AG04450 (cell line): ENCODE measurements at regions of chr11 and their contacts with region 1.

Region 1: GRCh38 chr11:1682225-1682905 is 14.6 kb upstream of the KRTAP5-6 start:
- DNase-seq: no peak
- H3K4me3 ChIP-seq: no peak overlapping the region
- H3K27ac ChIP-seq: no peak overlapping the region
- H3K27me3 ChIP-seq: peaks cover 4% of the 10 kb centered on the region
- CTCF ChIP-seq: no peak

Region 2: DNA sequence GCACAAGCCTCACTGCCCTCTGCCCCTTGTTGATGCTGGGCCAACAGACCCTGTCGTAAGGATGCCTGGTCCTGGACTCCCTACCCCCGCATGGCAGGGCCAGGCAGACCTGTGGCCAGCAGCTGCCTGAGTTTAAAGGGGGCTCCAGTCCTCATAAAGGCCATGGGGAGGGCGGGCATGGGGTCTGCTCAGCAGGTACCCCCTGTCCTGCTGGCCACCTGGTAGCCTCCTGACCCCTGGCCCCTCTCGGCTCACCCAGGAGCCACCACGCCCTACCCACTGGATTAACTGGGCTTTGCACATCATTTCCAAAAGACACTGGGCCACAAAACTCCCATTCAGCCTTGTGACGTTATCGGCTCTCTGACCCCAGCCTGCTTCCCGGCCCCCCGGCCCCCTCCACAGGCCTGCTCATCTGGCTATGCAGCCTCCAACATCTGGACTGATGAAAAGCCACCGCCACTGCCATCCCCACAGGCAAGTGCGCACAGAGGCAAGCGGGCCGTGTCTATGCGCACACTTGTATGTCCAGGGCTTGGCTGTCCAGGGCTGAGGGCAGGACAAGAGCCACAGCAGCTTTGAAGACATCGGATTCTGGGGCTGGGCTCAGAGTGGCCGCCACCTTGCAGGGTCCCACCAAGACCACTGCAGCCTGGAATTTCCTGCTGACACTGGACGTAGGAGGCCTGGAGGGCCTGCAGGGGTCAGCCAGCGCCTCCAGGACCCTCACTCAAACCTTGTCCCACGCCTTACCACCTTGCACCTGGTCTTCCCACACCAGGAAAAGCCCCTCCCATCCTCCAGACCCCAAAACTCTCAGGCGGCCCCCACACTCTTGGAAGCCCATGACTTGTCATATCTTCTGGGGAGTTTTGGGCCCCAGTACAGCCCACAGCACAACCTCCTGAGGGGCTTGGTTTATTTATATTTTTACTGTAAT is 408.1 kb after region 1 on chr11:
- CTCF ChIA-PET with region 1: no interaction called
- POLR2A ChIA-PET with region 1: interaction called, 14 read pairs
- DNase-seq: no peak
- H3K4me3 ChIP-seq: no peak overlapping the region
- H3K27ac ChIP-seq: no peak overlapping the region
- H3K27me3 ChIP-seq: no peaks in the 10 kb centered on the region
- CTCF ChIP-seq: no peak